ENCODE measurements at regions of chr4 and their contacts with region 1.

Region 1: GRCh38 chr4:102500696-102501446 is at the start of gene NFKB1:
- DNase-seq: peak; percentile 64 to 95 (median 79)
- ATAC-seq: peak; percentile 85
- H3K4me3 ChIP-seq: peak within 1 kb of the TSS; percentile 96
- H3K4me3 Mint-ChIP-seq: peak within 1 kb of the TSS; percentile 93 to 98 (median 97)
- H3K27ac ChIP-seq: peak within 1 kb of the TSS; percentile 100
- H3K27ac Mint-ChIP-seq: peak within 1 kb of the TSS; percentile 95 to 99 (median 96)
- H3K4me1 ChIP-seq: peaks cover 6 to 22% of the 10 kb centered on the region in 2 donors
- H3K4me1 Mint-ChIP-seq: peaks cover 16 to 35% (median 31%) of the 10 kb centered on the region in 7 donors
- H3K27me3 ChIP-seq: no peaks in the 10 kb centered on the region
- H3K27me3 Mint-ChIP-seq: no peaks in the 10 kb centered on the region
- total RNA-seq, gene NFKB1: 80.9 to 167 (median 136) TPM

Region 2: DNA sequence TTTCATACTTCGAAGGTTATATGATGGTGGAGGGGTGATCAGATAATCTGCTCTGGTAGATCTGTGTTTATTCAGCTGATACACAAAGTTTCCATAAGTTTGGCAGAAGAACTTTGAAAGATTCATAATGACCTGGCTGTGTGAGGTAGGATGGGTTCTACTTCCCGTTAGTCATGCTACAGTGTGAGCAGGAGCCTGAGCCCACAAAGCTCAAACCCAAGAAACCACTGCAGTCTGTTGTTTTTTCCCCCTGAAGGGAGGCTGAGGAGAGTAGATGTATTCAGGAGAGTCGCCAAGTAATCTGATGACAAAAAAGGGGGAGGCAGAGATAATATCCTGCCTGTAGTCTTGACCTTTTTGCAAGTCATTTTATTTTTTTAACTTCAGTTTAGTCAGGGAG is 1100.8 kb before region 1 on chr4:
- CTCF ChIA-PET with region 1: no interaction called
- POLR2A ChIA-PET with region 1: no interaction called
- intact Hi-C with region 1: no loop called
- DNase-seq: peak in 1 of 9 donors; percentile 32
- ATAC-seq: no peak
- H3K4me3 ChIP-seq: no peak overlapping the region
- H3K4me3 Mint-ChIP-seq: peak overlapping the region in 1 of 10 donors; percentile 46
- H3K27ac ChIP-seq: no peak overlapping the region
- H3K27ac Mint-ChIP-seq: peak overlapping the region in 1 of 9 donors; percentile 65
- H3K4me1 ChIP-seq: no peaks in the 10 kb centered on the region
- H3K4me1 Mint-ChIP-seq: peaks cover 0 to 17% (median 0%) of the 10 kb centered on the region in 7 donors
- H3K27me3 ChIP-seq: no peaks in the 10 kb centered on the region
- H3K27me3 Mint-ChIP-seq: peaks cover 4 to 21% (median 9%) of the 10 kb centered on the region in 5 donors

Region 3: DNA sequence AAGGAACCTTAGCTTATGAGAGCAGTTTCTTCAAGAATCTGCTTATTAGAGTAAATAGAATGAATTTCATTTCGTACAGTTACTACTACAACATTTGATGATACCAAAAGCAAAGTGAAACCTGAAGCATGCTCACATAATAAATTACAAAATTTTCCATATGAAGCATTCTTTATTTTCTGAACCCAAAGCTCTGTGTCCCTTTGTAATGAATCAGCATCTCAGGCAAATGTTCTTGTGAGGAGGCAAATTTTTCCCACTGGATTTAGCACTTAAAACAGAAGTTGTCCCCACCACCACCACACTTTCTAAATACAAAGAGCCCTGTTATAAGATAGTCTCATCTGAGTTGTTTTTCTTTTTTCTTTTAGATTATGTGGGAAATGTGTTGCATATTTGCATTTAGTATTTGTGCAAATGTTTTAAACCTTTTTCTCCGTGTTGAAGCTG is 70.4 kb before region 1 on chr4:
- CTCF ChIA-PET with region 1: no interaction called
- POLR2A ChIA-PET with region 1: no interaction called
- intact Hi-C with region 1: loop called in 1 of 2 experiments (anchors 1 kb)
- DNase-seq: no peak
- ATAC-seq: no peak
- H3K4me3 ChIP-seq: peak overlapping the region; percentile 72
- H3K4me3 Mint-ChIP-seq: peak overlapping the region; percentile 75 to 92 (median 88)
- H3K27ac ChIP-seq: peak overlapping the region; percentile 67
- H3K27ac Mint-ChIP-seq: peak overlapping the region in 8 of 9 donors; percentile 26 to 92 (median 80)
- H3K4me1 ChIP-seq: no peaks in the 10 kb centered on the region
- H3K4me1 Mint-ChIP-seq: peaks cover 0 to 19% (median 5%) of the 10 kb centered on the region in 7 donors
- H3K27me3 ChIP-seq: no peaks in the 10 kb centered on the region
- H3K27me3 Mint-ChIP-seq: peaks cover 0 to 16% (median 0%) of the 10 kb centered on the region in 5 donors

Region 4: GRCh38 chr4:102441978-102442911 is 58.6 kb before region 1 on chr4:
- CTCF ChIA-PET with region 1: no interaction called
- POLR2A ChIA-PET with region 1: no interaction called
- intact Hi-C with region 1: no loop called
- DNase-seq: no peak
- ATAC-seq: no peak
- H3K4me3 ChIP-seq: no peak overlapping the region
- H3K4me3 Mint-ChIP-seq: no peak overlapping the region
- H3K27ac ChIP-seq: no peak overlapping the region
- H3K27ac Mint-ChIP-seq: no peak overlapping the region
- H3K4me1 ChIP-seq: no peaks in the 10 kb centered on the region
- H3K4me1 Mint-ChIP-seq: peaks cover 0 to 15% (median 0%) of the 10 kb centered on the region in 7 donors
- H3K27me3 ChIP-seq: no peaks in the 10 kb centered on the region
- H3K27me3 Mint-ChIP-seq: peaks cover 0 to 5% (median 0%) of the 10 kb centered on the region in 5 donors

Region 5: DNA sequence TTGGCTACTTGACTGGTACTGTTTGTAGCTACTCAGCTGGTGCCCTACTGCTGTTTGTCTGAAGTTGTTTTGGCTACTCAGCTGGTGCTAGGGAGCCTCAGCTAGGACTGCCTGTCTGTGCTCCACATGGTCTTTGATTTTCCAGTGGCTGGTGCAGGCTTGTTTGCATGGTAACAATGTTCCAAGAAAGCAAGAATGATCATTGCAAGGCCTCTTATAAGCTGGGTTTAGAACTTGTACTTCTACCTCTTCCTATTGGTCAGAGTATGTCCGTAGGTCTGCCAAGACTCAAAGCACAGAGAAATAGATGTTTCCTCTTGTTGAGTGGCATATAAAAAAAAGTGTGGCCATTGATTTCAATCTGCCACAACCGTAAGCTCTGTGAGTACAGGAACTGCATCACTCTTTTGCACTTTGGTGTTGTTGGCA is 17.8 kb after region 1 on chr4:
- CTCF ChIA-PET with region 1: interaction called, 4 read pairs
- POLR2A ChIA-PET with region 1: interaction called, 46 read pairs
- intact Hi-C with region 1: loop called in 1 of 2 experiments (anchors 1 kb)
- DNase-seq: peak in 7 of 9 donors; percentile 41 to 77 (median 55)
- ATAC-seq: peak; percentile 89
- H3K4me3 ChIP-seq: no peak overlapping the region
- H3K4me3 Mint-ChIP-seq: peak overlapping the region; percentile 7 to 75 (median 60)
- H3K27ac ChIP-seq: peak overlapping the region; percentile 48
- H3K27ac Mint-ChIP-seq: peak overlapping the region in 8 of 9 donors; percentile 76 to 95 (median 89)
- H3K4me1 ChIP-seq: peaks cover 20 to 43% of the 10 kb centered on the region in 2 donors
- H3K4me1 Mint-ChIP-seq: peaks cover 49 to 91% (median 87%) of the 10 kb centered on the region in 7 donors
- H3K27me3 ChIP-seq: no peaks in the 10 kb centered on the region
- H3K27me3 Mint-ChIP-seq: no peaks in the 10 kb centered on the region

Region 6: GRCh38 chr4:102578819-102579218 is 77.9 kb after region 1 on chr4:
- CTCF ChIA-PET with region 1: no interaction called
- POLR2A ChIA-PET with region 1: no interaction called
- intact Hi-C with region 1: loop called in 1 of 2 experiments (anchors 2 kb)
- DNase-seq: peak in 2 of 9 donors; percentile 9 to 23
- ATAC-seq: no peak
- H3K4me3 ChIP-seq: no peak overlapping the region
- H3K4me3 Mint-ChIP-seq: peak overlapping the region in 3 of 10 donors; percentile 12 to 16 (median 14)
- H3K27ac ChIP-seq: no peak overlapping the region
- H3K27ac Mint-ChIP-seq: peak overlapping the region in 8 of 9 donors; percentile 29 to 69 (median 56)
- H3K4me1 ChIP-seq: peaks cover 7 to 41% of the 10 kb centered on the region in 2 donors
- H3K4me1 Mint-ChIP-seq: peaks cover 30 to 83% (median 75%) of the 10 kb centered on the region in 7 donors
- H3K27me3 ChIP-seq: no peaks in the 10 kb centered on the region
- H3K27me3 Mint-ChIP-seq: no peaks in the 10 kb centered on the region

Region 7: GRCh38 chr4:102620697-102621497 is 120.0 kb after region 1 on chr4:
- CTCF ChIA-PET with region 1: interaction called, 4 read pairs
- POLR2A ChIA-PET with region 1: interaction called, 3 read pairs
- intact Hi-C with region 1: loop called (anchors 2 kb)
- DNase-seq: peak in 2 of 9 donors; percentile 34 to 45
- ATAC-seq: peak; percentile 65
- H3K4me3 ChIP-seq: no peak overlapping the region
- H3K4me3 Mint-ChIP-seq: peak overlapping the region in 3 of 10 donors; percentile 9 to 42 (median 32)
- H3K27ac ChIP-seq: no peak overlapping the region
- H3K27ac Mint-ChIP-seq: peak overlapping the region in 7 of 9 donors; percentile 20 to 85 (median 59)
- H3K4me1 ChIP-seq: peaks cover 7 to 18% of the 10 kb centered on the region in 2 donors
- H3K4me1 Mint-ChIP-seq: peaks cover 15 to 73% (median 46%) of the 10 kb centered on the region in 7 donors
- H3K27me3 ChIP-seq: no peaks in the 10 kb centered on the region
- H3K27me3 Mint-ChIP-seq: no peaks in the 10 kb centered on the region

Region 8: GRCh38 chr4:102868781-102869568 is 368.1 kb after region 1 on chr4 and contains the start of gene CISD2:
- CTCF ChIA-PET with region 1: no interaction called
- POLR2A ChIA-PET with region 1: interaction called, 3 read pairs
- intact Hi-C with region 1: loop called (anchors 1 to 2 kb)
- DNase-seq: peak; percentile 87 to 95 (median 92)
- ATAC-seq: peak; percentile 90
- H3K4me3 ChIP-seq: peak within 1 kb of the TSS; percentile 95
- H3K4me3 Mint-ChIP-seq: peak within 1 kb of the TSS; percentile 88 to 100 (median 96)
- H3K27ac ChIP-seq: peak within 1 kb of the TSS; percentile 99
- H3K27ac Mint-ChIP-seq: peak within 1 kb of the TSS; percentile 98 to 100 (median 99)
- H3K4me1 ChIP-seq: peaks cover 16 to 28% of the 10 kb centered on the region in 2 donors
- H3K4me1 Mint-ChIP-seq: peaks cover 32 to 80% (median 71%) of the 10 kb centered on the region in 7 donors
- H3K27me3 ChIP-seq: no peaks in the 10 kb centered on the region
- H3K27me3 Mint-ChIP-seq: no peaks in the 10 kb centered on the region
- total RNA-seq, gene CISD2: 11.4 to 50.3 (median 13.4) TPM

Region 9: DNA sequence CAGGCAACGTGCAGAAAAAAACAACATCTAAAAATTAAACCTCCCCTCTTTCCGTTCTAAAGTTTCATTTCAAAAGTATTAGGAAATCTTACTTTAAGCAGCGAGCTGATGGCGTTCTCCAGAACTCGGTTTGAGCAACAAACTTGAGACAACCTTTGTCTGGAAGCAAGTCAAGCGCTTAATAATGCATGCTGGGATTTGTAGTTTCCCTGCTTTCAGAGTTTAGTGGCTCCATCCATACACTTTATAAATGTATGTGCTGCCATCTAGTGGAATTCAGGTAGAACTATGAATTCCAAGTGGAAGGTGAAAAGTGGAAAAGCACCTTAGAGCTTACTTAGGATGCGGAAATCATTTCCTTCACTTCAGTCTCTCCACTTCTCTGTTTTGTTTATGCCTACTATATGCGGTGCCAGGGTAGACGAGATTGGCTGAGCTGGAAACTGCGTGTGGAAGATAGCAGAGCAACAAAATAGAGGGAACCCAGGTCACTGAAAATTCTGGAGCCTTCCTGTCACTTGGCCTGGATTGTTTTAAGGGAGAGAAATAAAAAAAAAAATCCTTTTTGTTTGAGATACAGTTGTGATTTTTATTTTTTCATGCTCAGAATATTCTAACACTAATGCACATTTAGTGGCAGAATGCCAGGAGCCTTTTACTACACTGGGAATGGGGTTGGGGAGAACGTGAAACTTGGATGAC is 599.0 kb after region 1 on chr4 and contains the start of gene BDH2:
- CTCF ChIA-PET with region 1: no interaction called
- POLR2A ChIA-PET with region 1: no interaction called
- intact Hi-C with region 1: loop called (anchors 5 kb)
- DNase-seq: peak in 7 of 9 donors; percentile 72 to 86 (median 83)
- ATAC-seq: peak; percentile 100
- H3K4me3 ChIP-seq: peak within 1 kb of the TSS; percentile 62
- H3K4me3 Mint-ChIP-seq: peak within 1 kb of the TSS; percentile 88 to 100 (median 94)
- H3K27ac ChIP-seq: peak within 1 kb of the TSS; percentile 69
- H3K27ac Mint-ChIP-seq: peak within 1 kb of the TSS; percentile 81 to 95 (median 92)
- H3K4me1 ChIP-seq: peaks cover 4 to 11% of the 10 kb centered on the region in 2 donors
- H3K4me1 Mint-ChIP-seq: peaks cover 22 to 45% (median 34%) of the 10 kb centered on the region in 7 donors
- H3K27me3 ChIP-seq: no peaks in the 10 kb centered on the region
- H3K27me3 Mint-ChIP-seq: no peaks in the 10 kb centered on the region
- total RNA-seq, gene BDH2: 8.4 to 21.9 (median 18.5) TPM

Measured in naive thymus-derived CD4-positive, alpha-beta T cell (primary cell).